Calu3 (cell line): ENCODE measurements at regions of chr12 and their contacts with region 1.

Region 1: GRCh38 chr12:45745861-45746277 is 16.4 kb downstream of the ARID2 start:
- DNase-seq: no peak
- H3K4me3 Mint-ChIP-seq: no peak overlapping the region
- H3K27ac Mint-ChIP-seq: no peak overlapping the region
- H3K4me1 Mint-ChIP-seq: no peaks in the 10 kb centered on the region
- H3K27me3 Mint-ChIP-seq: no peaks in the 10 kb centered on the region
- CTCF ChIP-seq: no peak

Region 2: GRCh38 chr12:45130881-45131281 is 615.0 kb before region 1 on chr12:
- CTCF ChIA-PET with region 1: no interaction called
- intact Hi-C with region 1: loop called (anchors 1 kb)
- DNase-seq: peak; percentile 54
- H3K4me3 Mint-ChIP-seq: no peak overlapping the region
- H3K27ac Mint-ChIP-seq: no peak overlapping the region
- H3K4me1 Mint-ChIP-seq: peaks cover 15% of the 10 kb centered on the region
- H3K27me3 Mint-ChIP-seq: peaks cover 12% of the 10 kb centered on the region
- CTCF ChIP-seq: peak; percentile 33

Region 3: DNA sequence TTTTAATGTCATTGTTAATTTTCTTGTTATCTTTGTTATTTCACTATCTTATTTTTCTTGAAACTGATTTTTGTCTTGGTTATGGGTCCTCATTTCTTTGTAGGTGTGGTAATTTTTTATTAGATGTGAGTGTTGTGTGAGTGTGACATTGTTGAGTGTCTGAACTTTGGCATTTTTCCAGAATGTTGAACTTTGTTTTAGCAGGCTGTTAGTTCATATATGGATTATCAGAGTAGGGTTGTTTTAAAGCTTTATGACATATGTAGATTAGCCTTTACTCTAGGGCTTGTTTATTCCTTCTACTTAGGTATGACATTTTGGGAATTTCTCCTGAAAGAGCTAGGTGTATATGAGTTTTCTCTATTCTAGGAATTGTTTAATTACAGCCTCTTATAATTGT is 87.5 kb after region 1 on chr12:
- CTCF ChIA-PET with region 1: no interaction called
- intact Hi-C with region 1: no loop called
- DNase-seq: no peak
- H3K4me3 Mint-ChIP-seq: no peak overlapping the region
- H3K27ac Mint-ChIP-seq: no peak overlapping the region
- H3K4me1 Mint-ChIP-seq: no peaks in the 10 kb centered on the region
- H3K27me3 Mint-ChIP-seq: no peaks in the 10 kb centered on the region
- CTCF ChIP-seq: no peak